AG04450 (cell line): ENCODE measurements at regions of chrX and their contacts with region 1.

Region 1: DNA sequence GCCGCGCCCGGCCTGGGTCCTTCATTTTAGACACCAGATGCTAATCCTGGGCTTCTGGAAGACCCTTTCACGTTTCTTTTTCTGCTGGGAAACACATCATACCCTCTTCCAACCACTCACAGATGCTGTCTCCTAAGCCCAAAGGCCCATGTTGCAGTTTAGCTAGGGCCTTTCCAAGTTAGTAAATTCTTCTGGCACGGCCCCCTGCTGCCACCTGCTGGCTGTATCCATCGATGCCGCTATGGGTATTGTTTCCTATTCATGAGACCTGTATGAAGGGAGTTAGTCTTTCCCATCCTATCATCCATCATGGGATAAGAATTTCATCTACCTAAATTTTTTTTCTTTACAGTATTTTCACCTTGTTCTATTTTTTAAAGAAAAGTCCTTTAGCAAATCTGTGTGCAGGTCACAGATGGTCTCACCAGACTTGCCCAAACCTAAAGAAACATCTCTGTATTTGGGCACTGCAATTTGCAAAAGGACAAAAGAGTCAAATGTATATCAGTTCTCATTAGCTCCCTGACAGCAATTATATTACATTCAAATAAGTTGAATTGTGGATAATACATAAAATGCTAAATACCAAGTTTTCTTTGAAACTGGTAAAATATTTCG is 37.8 kb upstream of the SLC9A7 start:
- DNase-seq: no peak
- H3K4me3 ChIP-seq: no peak overlapping the region
- H3K27ac ChIP-seq: no peak overlapping the region
- H3K27me3 ChIP-seq: no peaks in the 10 kb centered on the region
- CTCF ChIP-seq: peak; percentile 74

Region 2: GRCh38 chrX:46737473-46737872 is 59.2 kb before region 1 on chrX:
- CTCF ChIA-PET with region 1: no interaction called
- POLR2A ChIA-PET with region 1: no interaction called
- DNase-seq: no peak
- H3K4me3 ChIP-seq: no peak overlapping the region
- H3K27ac ChIP-seq: peak overlapping the region; percentile 31
- H3K27me3 ChIP-seq: no peaks in the 10 kb centered on the region
- CTCF ChIP-seq: no peak

Region 3: DNA sequence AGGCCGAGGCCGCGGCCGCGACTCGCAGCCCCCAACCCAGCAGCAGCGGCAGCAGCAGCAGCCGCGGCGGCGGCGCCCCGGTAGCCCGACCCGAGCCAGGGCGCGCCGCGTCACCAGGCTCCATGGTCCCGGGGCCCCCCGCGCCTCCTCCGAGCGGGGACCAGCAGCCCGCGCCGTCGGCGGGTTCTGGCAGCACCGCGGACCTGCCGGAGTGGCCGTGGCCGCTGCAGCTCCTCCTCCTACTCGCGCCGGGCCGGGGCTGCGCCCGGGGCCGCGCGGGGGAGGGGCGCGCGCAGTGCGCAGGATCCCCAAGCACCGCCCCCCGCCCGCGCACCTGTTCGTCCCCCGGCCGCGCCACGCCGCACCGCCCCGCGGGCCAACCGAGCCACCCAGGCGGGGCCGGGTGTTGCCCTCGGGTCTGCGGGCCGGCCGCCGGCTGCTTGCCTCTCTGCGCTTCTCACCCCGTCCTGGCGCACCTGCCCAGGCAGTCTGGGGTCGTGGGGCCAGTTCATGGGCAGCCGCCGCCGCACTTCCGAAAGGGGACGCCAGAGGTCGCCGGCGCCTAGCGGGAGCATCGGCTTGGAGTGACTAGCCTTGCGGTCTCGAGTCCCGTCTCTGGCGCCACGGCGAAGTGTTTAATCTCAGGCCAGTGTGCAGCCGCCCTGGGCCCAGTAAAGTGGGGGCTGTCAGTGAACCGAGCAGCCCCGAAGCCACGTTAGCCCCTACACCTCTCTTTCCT is 37.6 kb before region 1 on chrX and contains the start of gene SLC9A7:
- CTCF ChIA-PET with region 1: interaction called, 32 read pairs
- POLR2A ChIA-PET with region 1: interaction called, 4 read pairs
- DNase-seq: no peak
- H3K4me3 ChIP-seq: peak within 1 kb of the TSS; percentile 73
- H3K27ac ChIP-seq: no peak within 1 kb of the TSS
- H3K27me3 ChIP-seq: no peaks in the 10 kb centered on the region
- CTCF ChIP-seq: peak; percentile 72
- polyA plus RNA-seq, gene SLC9A7: 15.3 and 16.3 TPM in 2 replicates